ENCODE measurements at regions of chr11 and their contacts with region 1.

Region 1: DNA sequence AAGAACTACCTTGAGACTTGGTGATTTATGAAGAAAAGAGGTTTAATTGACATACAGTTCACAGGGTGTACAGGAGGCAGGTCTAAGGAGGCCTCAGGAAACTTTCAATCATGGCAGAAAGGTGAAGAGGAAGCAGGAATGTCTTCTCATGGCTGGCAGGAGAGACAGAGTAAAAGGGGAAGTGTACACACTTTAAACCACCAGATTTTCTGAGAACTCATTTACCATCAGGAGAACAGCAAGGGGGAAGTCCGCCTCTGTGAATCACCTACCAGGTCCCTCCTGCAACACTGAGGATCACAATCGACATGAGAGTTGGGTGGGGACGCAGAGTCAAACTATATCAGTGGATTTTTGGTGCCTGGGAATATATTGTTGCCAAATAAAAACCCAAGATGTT is 40.3 kb upstream of the OR5D13 start:
- DNase-seq: no peak
- H3K4me3 ChIP-seq: no peak overlapping the region
- H3K27ac ChIP-seq: no peak overlapping the region
- H3K4me1 ChIP-seq: no peaks in the 10 kb centered on the region
- H3K27me3 ChIP-seq: no peaks in the 10 kb centered on the region
- CTCF ChIP-seq: no peak
- POLR2A ChIP-seq: no peak

Region 2: DNA sequence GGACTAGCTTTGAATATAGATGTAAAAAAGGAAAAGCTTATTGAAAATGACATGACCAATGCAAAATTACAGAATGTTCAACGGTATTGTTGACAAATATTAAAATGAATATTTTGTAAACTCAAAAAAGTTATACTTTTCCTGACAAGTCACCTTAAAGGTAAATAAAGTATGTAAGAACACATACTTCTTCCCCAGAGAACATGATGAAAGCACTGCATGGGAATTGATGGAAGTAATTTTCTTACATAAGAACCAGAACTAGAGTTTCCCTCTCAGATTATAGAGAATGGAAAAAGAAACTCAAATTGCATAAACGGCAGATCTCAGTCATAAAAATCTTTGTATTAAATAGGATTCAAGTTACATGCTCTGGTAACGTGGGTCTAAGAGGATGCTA is 98.1 kb before region 1 on chr11 and contains the start of gene OR4P4:
- intact Hi-C with region 1: no loop called
- DNase-seq: no peak
- H3K4me3 ChIP-seq: no peak within 1 kb of the TSS
- H3K27ac ChIP-seq: no peak within 1 kb of the TSS
- H3K4me1 ChIP-seq: no peaks in the 10 kb centered on the region
- H3K27me3 ChIP-seq: no peaks in the 10 kb centered on the region
- CTCF ChIP-seq: no peak
- POLR2A ChIP-seq: no peak
- total RNA-seq, gene OR4P4: not detected

Region 3: GRCh38 chr11:55707029-55707428 is 25.9 kb before region 1 on chr11:
- intact Hi-C with region 1: loop called (anchors 1 kb)
- DNase-seq: no peak
- H3K4me3 ChIP-seq: no peak overlapping the region
- H3K27ac ChIP-seq: no peak overlapping the region
- H3K4me1 ChIP-seq: no peaks in the 10 kb centered on the region
- H3K27me3 ChIP-seq: no peaks in the 10 kb centered on the region
- CTCF ChIP-seq: no peak
- POLR2A ChIP-seq: no peak

Region 4: GRCh38 chr11:56885177-56885576 is 1152.2 kb after region 1 on chr11:
- intact Hi-C with region 1: no loop called
- DNase-seq: peak in 1 of 2 donors; percentile 35
- H3K4me3 ChIP-seq: no peak overlapping the region
- H3K27ac ChIP-seq: peak overlapping the region; percentile 34 to 64
- H3K4me1 ChIP-seq: no peaks in the 10 kb centered on the region
- H3K27me3 ChIP-seq: no peaks in the 10 kb centered on the region
- CTCF ChIP-seq: no peak
- POLR2A ChIP-seq: no peak

Region 5: GRCh38 chr11:57049749-57050148 is 1316.8 kb after region 1 on chr11:
- intact Hi-C with region 1: no loop called
- DNase-seq: no peak
- H3K4me3 ChIP-seq: no peak overlapping the region
- H3K27ac ChIP-seq: no peak overlapping the region
- H3K4me1 ChIP-seq: no peaks in the 10 kb centered on the region
- H3K27me3 ChIP-seq: no peaks in the 10 kb centered on the region
- CTCF ChIP-seq: no peak
- POLR2A ChIP-seq: no peak

Region 6: DNA sequence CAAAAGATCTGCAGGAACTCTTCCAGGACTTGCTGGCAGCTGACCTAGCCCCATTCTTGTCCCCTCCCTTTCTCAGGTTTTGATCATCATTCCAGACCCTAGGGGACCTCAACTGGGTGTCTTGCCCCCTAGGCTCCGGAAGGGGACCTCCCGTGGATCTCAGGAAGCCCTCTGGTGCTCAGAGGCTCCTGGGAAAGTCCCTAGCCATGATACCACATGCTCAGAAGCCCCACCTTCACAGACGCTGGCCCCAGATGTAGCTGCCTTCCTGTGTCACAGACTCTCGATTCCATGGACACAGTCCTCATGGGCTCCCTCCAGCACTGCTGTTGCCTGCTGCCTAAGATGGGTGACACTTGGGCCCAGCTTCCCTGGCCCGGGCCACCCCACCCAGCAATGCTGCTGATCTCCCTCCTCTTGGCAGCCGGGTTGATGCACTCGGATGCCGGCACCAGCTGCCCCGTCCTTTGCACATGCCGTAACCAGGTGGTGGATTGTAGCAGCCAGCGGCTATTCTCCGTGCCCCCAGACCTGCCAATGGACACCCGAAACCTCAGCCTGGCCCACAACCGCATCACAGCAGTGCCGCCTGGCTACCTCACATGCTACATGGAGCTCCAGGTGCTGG is 1448.9 kb after region 1 on chr11 and contains the start of gene LRRC55:
- intact Hi-C with region 1: no loop called
- DNase-seq: no peak
- H3K4me3 ChIP-seq: no peak within 1 kb of the TSS
- H3K27ac ChIP-seq: no peak within 1 kb of the TSS
- H3K4me1 ChIP-seq: no peaks in the 10 kb centered on the region
- H3K27me3 ChIP-seq: peaks cover 0 to 34% of the 10 kb centered on the region in 2 donors
- CTCF ChIP-seq: no peak
- POLR2A ChIP-seq: no peak
- total RNA-seq, gene LRRC55: not detected